ENCODE measurements at regions of chr11 and their contacts with region 1.

Region 1: GRCh38 chr11:47213985-47214564 is 699 bp upstream of the DDB2 start:
- DNase-seq: peak; percentile 92 to 94
- ATAC-seq: peak; percentile 95 to 96
- H3K4me3 ChIP-seq: peak overlapping the region; percentile 69 to 89 (median 70)
- H3K27ac ChIP-seq: peak overlapping the region; percentile 95 to 98 (median 97)
- H3K4me1 ChIP-seq: peaks cover 14 to 23% of the 10 kb centered on the region in 2 donors
- H3K27me3 ChIP-seq: no peaks in the 10 kb centered on the region
- CTCF ChIP-seq: no peak
- POLR2A ChIP-seq: peak; percentile 64 to 74

Region 2: GRCh38 chr11:47269002-47269828 is 55.1 kb after region 1 on chr11:
- in situ Hi-C with region 1: no loop called
- intact Hi-C with region 1: loop called (anchors 1 kb)
- DNase-seq: peak; percentile 88 to 93
- ATAC-seq: peak; percentile 77 to 81
- H3K4me3 ChIP-seq: peak overlapping the region; percentile 55 to 87 (median 86)
- H3K27ac ChIP-seq: peak overlapping the region; percentile 98 to 99 (median 98)
- H3K4me1 ChIP-seq: peaks cover 37 to 40% of the 10 kb centered on the region in 2 donors
- H3K27me3 ChIP-seq: no peaks in the 10 kb centered on the region
- CTCF ChIP-seq: no peak
- POLR2A ChIP-seq: no peak